Activated T-helper 1 cell treated with anti-CD3 and anti-CD28 coated beads, Interleukin-12 subunit alpha, Interleukin-12 subunit beta, Interleukin-2, Interleukin-4 antibody, amounts not matched to agents 30 ng/mL and 10 ng/mL and 1 ng/mL, durations not matched to agents 14 hours and 24 hours and 36 hours (primary cell): ENCODE measurements at regions of chr1 and their contacts with region 1.

Region 1: DNA sequence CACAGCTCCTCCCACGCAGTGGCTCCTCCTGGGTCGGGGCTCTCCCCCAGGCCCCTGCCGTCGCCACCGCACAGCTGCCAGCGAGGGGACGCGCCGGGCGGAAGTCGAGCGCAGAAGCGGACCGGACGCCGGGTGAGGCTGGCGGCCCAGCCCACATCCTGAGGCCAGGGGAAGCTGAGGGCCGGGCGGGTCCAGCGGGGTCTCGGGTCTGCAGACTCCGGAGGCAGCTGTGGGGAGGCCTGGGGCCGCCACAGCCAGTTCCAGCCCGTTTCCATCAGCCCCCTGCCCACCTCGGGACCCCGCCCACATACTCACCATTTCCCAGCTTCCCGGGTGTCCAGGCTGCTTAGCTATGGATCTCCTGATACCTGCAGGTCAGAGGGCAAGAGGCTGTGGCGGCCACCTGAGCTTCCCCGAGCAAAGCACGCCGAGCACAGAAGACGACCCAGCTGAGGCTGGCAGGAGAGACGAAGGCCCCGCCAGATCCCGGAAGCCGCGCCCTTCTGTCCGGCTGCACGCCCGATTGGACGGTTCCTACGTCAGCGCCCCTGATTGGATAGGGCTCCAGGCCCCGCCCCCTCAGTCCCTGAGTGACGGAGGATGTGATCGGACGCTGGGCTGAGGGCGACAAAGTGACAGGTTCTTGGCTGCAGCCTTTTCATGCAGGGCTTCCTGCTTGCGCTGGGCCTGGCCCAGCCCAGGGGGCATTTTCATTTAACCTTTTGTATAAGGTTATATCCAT is 38.7 kb upstream of the ZNF124 start:
- DNase-seq: peak; percentile 93
- H3K4me3 Mint-ChIP-seq: peak overlapping the region; percentile 94
- H3K27ac Mint-ChIP-seq: peak overlapping the region; percentile 94
- H3K4me1 Mint-ChIP-seq: peaks cover 29% of the 10 kb centered on the region
- H3K27me3 Mint-ChIP-seq: no peaks in the 10 kb centered on the region

Region 2: GRCh38 chr1:247078261-247079140 is 132.0 kb before region 1 on chr1 and contains the start of gene ZNF670:
- intact Hi-C with region 1: loop called (anchors 1 kb)
- DNase-seq: peak; percentile 81
- H3K4me3 Mint-ChIP-seq: peak within 1 kb of the TSS; percentile 89
- H3K27ac Mint-ChIP-seq: peak within 1 kb of the TSS; percentile 75
- H3K4me1 Mint-ChIP-seq: peaks cover 25% of the 10 kb centered on the region
- H3K27me3 Mint-ChIP-seq: peaks cover 2% of the 10 kb centered on the region
- total RNA-seq, gene ZNF670: 2.5 and 2.9 TPM in 2 replicates

Region 3: GRCh38 chr1:247172996-247173395 is 37.6 kb before region 1 on chr1:
- intact Hi-C with region 1: loop called (anchors 2 kb)
- DNase-seq: no peak
- H3K4me3 Mint-ChIP-seq: no peak overlapping the region
- H3K27ac Mint-ChIP-seq: no peak overlapping the region
- H3K4me1 Mint-ChIP-seq: peaks cover 6% of the 10 kb centered on the region
- H3K27me3 Mint-ChIP-seq: no peaks in the 10 kb centered on the region

Region 4: GRCh38 chr1:247322849-247323586 is 112.5 kb after region 1 on chr1:
- intact Hi-C with region 1: loop called (anchors 2 kb)
- DNase-seq: no peak
- H3K4me3 Mint-ChIP-seq: no peak overlapping the region
- H3K27ac Mint-ChIP-seq: peak overlapping the region; percentile 50
- H3K4me1 Mint-ChIP-seq: peaks cover 24% of the 10 kb centered on the region
- H3K27me3 Mint-ChIP-seq: no peaks in the 10 kb centered on the region

Region 5: GRCh38 chr1:247390116-247390791 is 179.7 kb after region 1 on chr1:
- intact Hi-C with region 1: loop called (anchors 1 kb)
- DNase-seq: peak; percentile 72
- H3K4me3 Mint-ChIP-seq: peak overlapping the region; percentile 17
- H3K27ac Mint-ChIP-seq: no peak overlapping the region
- H3K4me1 Mint-ChIP-seq: peaks cover 6% of the 10 kb centered on the region
- H3K27me3 Mint-ChIP-seq: peaks cover 9% of the 10 kb centered on the region